ENCODE measurements at regions of chr17 and their contacts with region 1.

Region 1: GRCh38 chr17:33725675-33726271 is 432.7 kb upstream of the ASIC2 start:
- DNase-seq: peak; percentile 43 to 49
- ATAC-seq: peak in 1 of 2 experiments; percentile 92; a peak in 3 of 6 replicates
- H3K4me3 ChIP-seq: no peak overlapping the region
- H3K27ac ChIP-seq: no peak overlapping the region
- H3K4me1 ChIP-seq: no peaks in the 10 kb centered on the region
- CTCF ChIP-seq: peak; percentile 52
- EP300 ChIP-seq: no peak
- POLR2A ChIP-seq: no peak
- RAD21 ChIP-seq: peak; percentile 44 to 57

Region 2: GRCh38 chr17:33674685-33675084 is 51.1 kb before region 1 on chr17:
- CTCF ChIA-PET with region 1: interaction called, 10 read pairs
- POLR2A ChIA-PET with region 1: no interaction called
- DNase-seq: peak; percentile 61 to 64
- ATAC-seq: peak; percentile 96 to 99
- H3K4me3 ChIP-seq: no peak overlapping the region
- H3K27ac ChIP-seq: no peak overlapping the region
- H3K4me1 ChIP-seq: no peaks in the 10 kb centered on the region
- CTCF ChIP-seq: peak; percentile 70
- EP300 ChIP-seq: no peak
- POLR2A ChIP-seq: no peak
- RAD21 ChIP-seq: peak; percentile 63 to 69

Region 3: DNA sequence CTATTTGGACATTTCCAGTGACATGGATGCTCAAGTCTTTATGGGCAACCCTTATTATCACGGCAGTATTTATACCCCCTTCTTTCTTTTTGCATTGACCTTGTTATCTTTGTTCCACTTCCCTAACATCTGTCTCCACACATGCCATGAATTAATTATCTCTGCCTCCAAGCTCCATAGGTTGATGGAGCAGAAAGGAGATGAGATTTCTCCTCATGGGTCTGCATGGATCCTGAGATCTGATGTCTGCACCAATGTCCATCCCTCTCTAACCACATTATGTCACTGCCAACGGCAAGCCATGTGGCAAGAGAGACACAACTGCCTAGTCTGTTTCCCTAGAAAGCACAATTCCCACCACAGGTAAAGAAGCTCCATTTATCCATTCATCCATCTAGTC is 15.9 kb before region 1 on chr17:
- CTCF ChIA-PET with region 1: interaction called, 11 read pairs
- POLR2A ChIA-PET with region 1: no interaction called
- DNase-seq: no peak
- ATAC-seq: no peak
- H3K4me3 ChIP-seq: no peak overlapping the region
- H3K27ac ChIP-seq: no peak overlapping the region
- H3K4me1 ChIP-seq: no peaks in the 10 kb centered on the region
- CTCF ChIP-seq: no peak
- EP300 ChIP-seq: no peak
- POLR2A ChIP-seq: no peak
- RAD21 ChIP-seq: no peak

Region 4: DNA sequence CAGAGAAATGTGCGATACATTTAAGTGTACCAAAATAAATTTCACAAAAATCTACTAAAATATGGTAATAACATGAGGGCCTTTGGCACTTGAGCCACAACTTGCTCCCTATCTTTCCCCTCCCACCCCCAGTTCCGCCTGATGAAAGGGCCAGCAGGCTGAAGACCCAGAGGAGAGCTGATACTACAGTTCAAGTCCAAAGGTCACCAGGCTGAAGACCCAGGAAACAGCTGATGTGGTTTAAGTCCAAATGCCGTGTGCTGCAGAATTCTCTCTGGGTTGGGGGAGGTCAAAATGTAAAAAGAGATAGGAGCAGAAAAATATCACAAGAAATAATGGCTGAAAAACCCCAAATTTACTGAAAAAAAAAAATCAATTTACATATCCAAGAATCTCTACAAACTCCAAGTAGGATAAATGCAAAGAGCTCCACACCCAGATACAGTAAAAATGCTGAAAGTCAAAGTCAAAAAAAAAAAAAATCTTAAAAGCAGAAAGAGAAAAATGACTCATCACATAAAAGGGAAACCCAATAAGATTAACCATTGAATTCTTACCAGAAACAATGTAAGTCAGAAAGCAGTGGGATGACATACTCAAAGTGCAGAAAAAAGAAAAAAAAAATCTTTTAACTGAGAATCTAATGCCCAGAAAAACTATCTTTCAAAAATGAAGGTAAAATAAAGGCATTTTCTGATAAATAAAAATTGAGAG is 19.4 kb after region 1 on chr17:
- CTCF ChIA-PET with region 1: interaction called, 70 read pairs
- POLR2A ChIA-PET with region 1: no interaction called
- DNase-seq: no peak
- ATAC-seq: no peak
- H3K4me3 ChIP-seq: no peak overlapping the region
- H3K27ac ChIP-seq: no peak overlapping the region
- H3K4me1 ChIP-seq: no peaks in the 10 kb centered on the region
- CTCF ChIP-seq: no peak
- EP300 ChIP-seq: no peak
- POLR2A ChIP-seq: no peak
- RAD21 ChIP-seq: no peak

Region 5: GRCh38 chr17:33750943-33751701 is 25.3 kb after region 1 on chr17:
- CTCF ChIA-PET with region 1: interaction called, 70 read pairs
- POLR2A ChIA-PET with region 1: no interaction called
- DNase-seq: peak; percentile 32 to 57
- ATAC-seq: peak; percentile 85 to 92
- H3K4me3 ChIP-seq: peak overlapping the region; percentile 8; the same call in 1 of the 3 replicates
- H3K27ac ChIP-seq: no peak overlapping the region
- H3K4me1 ChIP-seq: no peaks in the 10 kb centered on the region
- CTCF ChIP-seq: peak; percentile 70
- EP300 ChIP-seq: no peak
- POLR2A ChIP-seq: no peak
- RAD21 ChIP-seq: peak; percentile 86 to 93

Region 6: GRCh38 chr17:33769066-33769465 is 43.3 kb after region 1 on chr17:
- CTCF ChIA-PET with region 1: interaction called, 10 read pairs
- POLR2A ChIA-PET with region 1: no interaction called
- DNase-seq: no peak
- ATAC-seq: no peak
- H3K4me3 ChIP-seq: no peak overlapping the region
- H3K27ac ChIP-seq: no peak overlapping the region
- H3K4me1 ChIP-seq: no peaks in the 10 kb centered on the region
- CTCF ChIP-seq: no peak
- EP300 ChIP-seq: no peak
- POLR2A ChIP-seq: no peak
- RAD21 ChIP-seq: no peak

Region 7: GRCh38 chr17:33875973-33876372 is 150.2 kb after region 1 on chr17:
- CTCF ChIA-PET with region 1: no interaction called
- POLR2A ChIA-PET with region 1: no interaction called
- DNase-seq: no peak
- ATAC-seq: no peak
- H3K4me3 ChIP-seq: no peak overlapping the region
- H3K27ac ChIP-seq: no peak overlapping the region
- H3K4me1 ChIP-seq: peaks cover 8% of the 10 kb centered on the region; the same call in 2 of the 3 replicates
- CTCF ChIP-seq: no peak
- EP300 ChIP-seq: no peak
- POLR2A ChIP-seq: no peak
- RAD21 ChIP-seq: no peak